ENCODE measurements at regions of chr5 and their contacts with region 1.

Region 1: GRCh38 chr5:177462021-177462670 is 11.3 kb downstream of the DBN1 start:
- DNase-seq: peak; percentile 46 to 61 (median 50)
- H3K4me3 ChIP-seq: peak overlapping the region in 3 of 7 experiments; percentile 7 to 41 (median 36)
- H3K27ac ChIP-seq: no peak overlapping the region
- H3K4me1 ChIP-seq: peaks cover 4 to 25% (median 18%) of the 10 kb centered on the region in 4 experiments
- H3K27me3 ChIP-seq: no peaks in the 10 kb centered on the region

Region 2: DNA sequence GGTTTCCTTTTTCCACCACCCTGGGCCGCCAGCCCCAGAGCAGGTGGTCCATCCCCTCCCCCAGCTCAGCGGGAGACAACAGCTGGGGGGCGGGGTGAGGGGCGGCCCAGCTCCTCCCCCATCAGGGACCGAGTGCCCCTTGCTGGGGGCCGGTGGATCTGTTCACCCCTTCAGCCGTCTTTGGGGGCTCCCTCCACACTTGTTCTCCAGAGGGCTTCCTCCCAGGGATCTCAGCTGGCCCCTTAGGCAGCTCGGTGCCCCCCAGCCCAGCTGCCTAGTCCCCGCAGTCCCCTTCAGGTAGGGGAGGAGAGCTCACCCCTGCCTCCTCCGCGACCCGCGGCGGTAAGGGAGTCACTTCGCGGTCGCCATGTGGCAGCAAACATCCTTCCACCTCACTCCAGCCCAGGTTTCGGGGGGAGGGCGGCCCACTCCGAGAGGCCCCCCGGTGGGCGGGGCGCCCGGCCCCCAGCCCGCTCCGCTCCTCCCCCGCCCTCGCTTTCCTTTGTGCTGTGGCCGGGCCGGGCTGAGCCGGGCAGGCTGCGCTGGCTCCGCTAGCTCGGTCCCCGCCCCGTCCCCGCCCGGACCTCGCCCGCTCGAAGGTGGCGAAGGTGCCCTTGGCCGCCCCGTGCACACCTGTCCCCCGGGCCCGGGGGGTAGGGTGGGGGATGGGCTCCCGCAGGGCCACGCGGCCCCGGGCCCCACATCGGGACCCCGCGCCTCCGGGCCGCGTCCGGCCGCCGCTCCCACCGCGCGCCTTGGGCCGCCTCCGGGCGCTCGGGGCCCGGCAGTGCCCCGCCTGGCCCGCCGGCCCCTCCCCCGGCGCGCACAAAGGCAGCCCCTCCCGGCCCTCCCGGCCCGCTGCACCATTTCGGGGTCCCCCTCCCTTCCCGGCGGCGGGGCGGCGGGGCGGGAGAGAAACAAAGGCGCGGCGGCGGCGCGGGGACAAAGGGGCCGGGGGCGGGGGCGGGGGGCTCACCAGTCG is 10.6 kb after region 1 on chr5:
- CTCF ChIA-PET with region 1: interaction called, 62 read pairs
- POLR2A ChIA-PET with region 1: no interaction called
- DNase-seq: peak; percentile 59 to 88 (median 85)
- H3K4me3 ChIP-seq: peak overlapping the region in 6 of 7 experiments; percentile 36 to 76 (median 60)
- H3K27ac ChIP-seq: peak overlapping the region in 1 of 2 experiments; percentile 5
- H3K4me1 ChIP-seq: peaks cover 0 to 36% (median 32%) of the 10 kb centered on the region in 4 experiments
- H3K27me3 ChIP-seq: no peaks in the 10 kb centered on the region

Region 3: DNA sequence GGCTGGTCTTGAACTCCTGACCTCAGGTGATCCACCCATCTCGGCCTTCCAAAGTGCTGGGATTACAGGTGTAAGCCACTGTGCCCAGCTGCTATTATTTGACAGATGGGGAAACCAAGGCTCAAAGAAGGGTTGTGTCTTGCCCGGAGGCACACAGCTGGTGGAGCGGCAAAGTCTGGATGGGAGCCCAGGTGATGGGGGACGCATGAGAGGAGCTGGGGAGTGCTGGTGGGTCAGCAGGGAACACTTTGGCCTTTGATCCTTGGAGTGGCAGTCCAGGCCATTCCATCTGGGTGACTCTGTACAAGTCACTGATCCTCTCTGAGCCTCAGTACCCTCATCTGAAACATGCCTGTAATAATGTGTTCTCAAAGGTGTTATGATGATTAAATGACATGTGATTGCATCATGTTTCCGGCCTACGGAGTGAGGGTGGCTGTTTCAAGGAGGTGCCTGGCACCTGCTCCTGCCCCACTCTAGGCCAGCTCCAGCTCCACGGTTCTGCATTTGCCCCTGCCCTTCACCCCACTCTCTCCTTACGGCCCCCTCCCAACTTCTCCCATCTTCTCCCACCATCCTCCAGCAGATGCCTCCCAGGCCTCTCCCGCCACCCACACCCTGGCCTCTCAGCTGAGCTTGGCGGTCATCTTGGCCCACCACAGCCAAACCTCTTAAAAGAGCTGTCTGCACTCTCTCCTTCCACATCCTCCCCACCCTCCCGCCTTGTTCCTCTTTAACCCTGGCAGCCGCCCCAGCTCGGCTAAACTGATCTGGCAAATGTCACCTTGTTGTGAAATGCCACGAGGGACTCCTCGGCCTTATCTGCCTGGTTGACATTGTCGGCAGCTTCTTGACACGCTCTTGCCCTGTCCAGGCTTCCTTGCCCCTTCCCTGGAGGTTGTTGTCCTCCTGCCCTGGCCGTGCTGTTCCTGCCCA is 16.8 kb after region 1 on chr5:
- CTCF ChIA-PET with region 1: interaction called, 62 read pairs
- POLR2A ChIA-PET with region 1: interaction called, 3 read pairs
- DNase-seq: peak; percentile 70 to 89 (median 86)
- H3K4me3 ChIP-seq: no peak overlapping the region
- H3K27ac ChIP-seq: peak overlapping the region in 1 of 2 experiments; percentile 56
- H3K4me1 ChIP-seq: peaks cover 0 to 46% (median 40%) of the 10 kb centered on the region in 4 experiments
- H3K27me3 ChIP-seq: no peaks in the 10 kb centered on the region

Region 4: GRCh38 chr5:177497292-177498033 is 35.3 kb after region 1 on chr5 and contains the start of gene PDLIM7:
- CTCF ChIA-PET with region 1: interaction called, 57 read pairs
- POLR2A ChIA-PET with region 1: interaction called, 4 read pairs
- DNase-seq: peak; percentile 92 to 96 (median 95)
- H3K4me3 ChIP-seq: peak within 1 kb of the TSS; percentile 39 to 78 (median 69)
- H3K27ac ChIP-seq: peak within 1 kb of the TSS in 1 of 2 experiments; percentile 66
- H3K4me1 ChIP-seq: peaks cover 2 to 63% (median 50%) of the 10 kb centered on the region in 4 experiments
- H3K27me3 ChIP-seq: peaks cover 0 to 5% (median 0%) of the 10 kb centered on the region in 5 experiments